Activated CD4-positive, alpha-beta memory T cell treated with anti-CD3 and anti-CD28 coated beads, Interleukin-2, amount 10 ng/mL, durations not matched to agents 7 days and 5 days (primary cell): ENCODE measurements at regions of chr11 and their contacts with region 1.

Region 1: GRCh38 chr11:76598426-76598839 is 72.1 kb downstream of the LRRC32 start:
- DNase-seq: peak; percentile 21
- H3K4me3 Mint-ChIP-seq: no peak overlapping the region
- H3K27ac Mint-ChIP-seq: no peak overlapping the region
- H3K4me1 Mint-ChIP-seq: peaks cover 44% of the 10 kb centered on the region
- H3K27me3 Mint-ChIP-seq: peaks cover 3% of the 10 kb centered on the region

Region 2: DNA sequence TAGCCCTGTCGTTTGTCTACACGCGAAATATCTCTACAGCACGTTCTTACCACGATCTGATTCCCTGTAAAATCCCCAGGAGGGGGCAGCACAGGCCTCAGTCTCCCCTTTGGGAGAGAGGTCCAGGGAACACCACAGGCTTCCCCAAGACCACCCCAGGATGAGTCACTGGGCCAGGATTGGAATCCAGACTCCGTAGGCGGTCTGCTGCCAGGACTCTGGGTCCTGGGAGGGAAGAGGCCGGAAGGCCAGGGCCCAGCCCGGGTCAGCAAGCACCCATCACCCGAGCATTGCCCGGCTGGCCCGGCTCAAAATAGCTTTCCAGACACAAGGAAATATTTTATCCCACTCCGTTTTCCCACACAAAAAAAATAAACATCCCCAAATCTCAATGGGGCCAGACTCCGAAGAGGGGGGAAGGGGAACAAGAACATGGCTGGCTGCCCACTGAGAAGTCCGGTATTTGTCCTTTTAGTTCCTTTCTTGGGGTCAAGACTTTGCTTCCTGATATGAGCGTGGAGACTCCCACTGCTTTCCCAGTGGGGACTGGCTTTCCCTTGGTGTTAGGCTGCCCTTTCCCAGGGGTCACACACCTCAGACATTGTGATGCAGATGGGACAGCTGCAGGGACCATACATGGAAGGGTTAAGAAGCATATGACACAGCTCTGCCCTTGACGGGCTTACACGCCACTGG is 19.2 kb before region 1 on chr11:
- CTCF ChIA-PET with region 1: no interaction called
- POLR2A ChIA-PET with region 1: no interaction called
- DNase-seq: no peak
- H3K4me3 Mint-ChIP-seq: no peak overlapping the region
- H3K27ac Mint-ChIP-seq: no peak overlapping the region
- H3K4me1 Mint-ChIP-seq: peaks cover 9% of the 10 kb centered on the region
- H3K27me3 Mint-ChIP-seq: no peaks in the 10 kb centered on the region

Region 3: GRCh38 chr11:76672431-76673175 is 74.2 kb after region 1 on chr11:
- CTCF ChIA-PET with region 1: interaction called, 12 read pairs
- POLR2A ChIA-PET with region 1: no interaction called
- DNase-seq: peak; percentile 44
- H3K4me3 Mint-ChIP-seq: no peak overlapping the region
- H3K27ac Mint-ChIP-seq: peak overlapping the region; percentile 57
- H3K4me1 Mint-ChIP-seq: peaks cover 42% of the 10 kb centered on the region
- H3K27me3 Mint-ChIP-seq: peaks cover 33% of the 10 kb centered on the region

Region 4: GRCh38 chr11:76680518-76681425 is 82.3 kb after region 1 on chr11:
- CTCF ChIA-PET with region 1: interaction called, 13 read pairs
- POLR2A ChIA-PET with region 1: interaction called, 4 read pairs
- DNase-seq: peak; percentile 72
- H3K4me3 Mint-ChIP-seq: no peak overlapping the region
- H3K27ac Mint-ChIP-seq: no peak overlapping the region
- H3K4me1 Mint-ChIP-seq: peaks cover 31% of the 10 kb centered on the region
- H3K27me3 Mint-ChIP-seq: peaks cover 2% of the 10 kb centered on the region